Adrenal gland (tissue), 19 donors: ENCODE measurements at regions of chr13 and their contacts with region 1.

Region 1: GRCh38 chr13:52450012-52450792 is at the start of gene VPS36:
- DNase-seq: peak; percentile 93 to 98 (median 97)
- H3K4me3 ChIP-seq: peak within 1 kb of the TSS; percentile 37 to 89 (median 58)
- H3K27ac ChIP-seq: peak within 1 kb of the TSS; percentile 96 to 99 (median 97)
- H3K4me1 ChIP-seq: peaks cover 11 to 21% of the 10 kb centered on the region in 2 donors
- H3K27me3 ChIP-seq: no peaks in the 10 kb centered on the region
- CTCF ChIP-seq: peak; percentile 83 to 100 (median 95)
- POLR2A ChIP-seq: peak; percentile 85 to 89
- total RNA-seq, gene VPS36: 21.7 to 54.7 (median 31.3) TPM

Region 2: GRCh38 chr13:52344108-52344507 is 106.1 kb before region 1 on chr13:
- intact Hi-C with region 1: loop called (anchors 5 to 10 kb)
- DNase-seq: no peak
- H3K4me3 ChIP-seq: no peak overlapping the region
- H3K27ac ChIP-seq: no peak overlapping the region
- H3K4me1 ChIP-seq: no peaks in the 10 kb centered on the region
- H3K27me3 ChIP-seq: peaks cover 5% of the 10 kb centered on the region
- CTCF ChIP-seq: no peak
- POLR2A ChIP-seq: no peak

Region 3: DNA sequence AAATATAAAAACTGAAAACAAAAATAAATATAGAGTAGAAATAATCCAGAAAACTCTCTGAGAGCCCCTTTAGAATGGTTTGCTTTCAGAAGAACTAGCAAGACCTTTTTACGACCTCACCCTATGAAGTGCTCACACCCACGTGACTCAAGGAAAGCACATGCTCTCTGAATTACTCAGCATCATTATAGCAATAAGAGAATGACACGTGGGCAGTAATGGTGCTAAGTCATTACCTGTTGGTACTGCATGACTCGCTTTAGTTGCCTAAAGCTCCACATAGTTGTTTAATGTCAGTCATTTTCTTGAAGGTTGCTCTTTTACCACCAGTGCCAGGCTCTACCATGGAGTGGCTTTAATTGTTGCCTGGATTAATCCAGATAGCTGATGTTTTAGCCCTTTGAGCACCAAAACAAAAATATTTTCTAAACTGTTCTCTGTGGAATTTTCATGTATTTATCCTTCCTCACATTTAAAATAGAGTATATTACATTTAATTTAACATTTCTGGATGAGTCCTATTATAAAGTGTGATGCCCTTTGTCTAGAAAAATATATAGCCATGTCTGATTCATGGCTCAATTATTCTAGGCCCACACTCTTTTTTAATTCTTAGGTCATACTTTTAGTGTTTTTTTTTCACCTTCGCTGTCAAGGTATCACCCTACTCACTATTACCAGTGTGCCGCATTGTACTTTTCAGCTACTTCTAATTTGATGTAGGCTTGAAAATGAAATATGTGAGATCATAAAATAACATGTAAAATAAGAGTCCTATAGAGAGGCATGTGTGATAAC is 101.0 kb before region 1 on chr13:
- intact Hi-C with region 1: loop called (anchors 5 to 10 kb)
- DNase-seq: no peak
- H3K4me3 ChIP-seq: no peak overlapping the region
- H3K27ac ChIP-seq: no peak overlapping the region
- H3K4me1 ChIP-seq: no peaks in the 10 kb centered on the region
- H3K27me3 ChIP-seq: no peaks in the 10 kb centered on the region
- CTCF ChIP-seq: no peak
- POLR2A ChIP-seq: no peak